ENCODE measurements at regions of chrX and their contacts with region 1.

Region 1: DNA sequence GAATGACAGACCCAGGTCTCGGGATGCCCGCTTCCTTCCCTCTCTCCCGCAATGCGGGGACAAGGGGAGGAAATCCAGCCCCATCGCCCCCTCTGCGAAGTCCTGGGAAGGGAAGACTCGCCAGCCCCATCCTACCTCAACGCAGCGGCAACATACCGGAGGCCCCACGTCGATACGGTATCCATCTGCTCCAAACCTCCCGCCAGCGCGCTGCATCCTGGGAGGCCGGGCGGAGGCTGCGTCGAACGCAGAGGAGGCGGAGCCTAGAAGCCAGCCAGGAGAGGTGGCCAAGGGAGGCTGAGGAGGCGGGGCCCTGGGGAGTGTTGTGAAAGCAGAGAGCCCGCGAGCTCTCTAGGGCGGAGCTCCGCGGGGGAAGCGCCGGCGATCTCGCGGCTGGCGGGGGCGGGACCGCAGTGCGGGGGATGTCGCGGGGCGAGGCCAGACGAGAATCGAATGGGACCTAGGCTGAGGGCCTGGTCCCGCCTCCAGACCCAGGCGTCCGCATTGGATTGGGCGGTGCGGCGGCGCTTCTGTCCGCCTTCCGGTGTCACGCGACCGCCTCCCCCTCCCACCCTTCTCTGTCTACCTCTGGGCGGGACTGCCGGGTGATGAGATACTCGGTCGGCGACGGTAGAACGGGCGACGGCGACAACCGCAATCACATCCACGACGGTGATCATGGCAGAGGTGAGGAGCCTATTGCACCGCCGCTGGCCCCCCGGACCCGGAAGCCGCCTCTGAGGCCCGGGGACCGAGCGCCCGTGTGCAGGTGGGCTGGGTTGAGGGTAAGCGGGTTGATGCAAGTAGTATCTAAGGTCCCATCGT is at the starts of genes FANCB and MOSPD2:
- DNase-seq: peak; percentile 93
- H3K4me3 Mint-ChIP-seq: peak within 1 kb of the TSS; percentile 84
- H3K27ac Mint-ChIP-seq: peak within 1 kb of the TSS; percentile 81
- H3K4me1 Mint-ChIP-seq: peaks cover 17% of the 10 kb centered on the region
- H3K27me3 Mint-ChIP-seq: no peaks in the 10 kb centered on the region
- total RNA-seq, gene FANCB: 17.0 and 18.8 TPM in 2 replicates
- total RNA-seq, gene MOSPD2: 14.3 and 15.1 TPM in 2 replicates

Region 2: DNA sequence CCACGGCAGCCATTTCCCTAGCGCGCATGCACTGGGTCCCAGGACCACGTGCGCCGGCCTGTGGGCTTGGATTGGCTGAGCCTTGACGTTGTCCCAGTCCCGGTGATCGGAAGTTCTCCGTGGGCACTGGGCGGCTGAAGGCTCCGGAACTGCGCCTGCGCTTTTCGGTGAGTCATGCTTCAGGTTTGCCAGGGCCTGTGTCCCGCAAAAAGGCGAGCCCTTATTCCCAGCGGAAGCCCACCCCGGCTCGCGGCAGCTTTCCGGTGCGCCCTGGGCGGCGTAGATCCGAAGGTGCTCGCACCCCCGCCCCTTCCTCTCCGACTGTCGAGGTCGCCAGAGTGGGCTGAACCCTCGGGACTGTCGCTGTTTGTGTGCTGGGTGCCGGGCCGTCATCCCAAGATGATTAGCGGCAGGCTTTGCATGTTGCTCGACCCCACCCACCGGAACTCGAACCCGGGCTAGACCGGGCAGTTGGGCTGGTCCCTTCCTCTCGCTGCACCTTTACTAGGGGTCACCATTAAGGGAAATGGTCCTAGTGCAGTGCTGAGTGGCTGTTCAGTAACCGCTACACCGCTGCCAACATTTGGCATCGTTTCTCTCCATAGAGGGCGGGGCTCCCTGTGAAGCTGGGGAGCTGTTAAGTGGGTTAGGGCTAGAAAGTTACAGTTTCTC is 1219.9 kb before region 1 on chrX and contains the start of gene TCEANC:
- intact Hi-C with region 1: loop called (anchors 1 kb)
- DNase-seq: peak; percentile 91
- H3K4me3 Mint-ChIP-seq: peak within 1 kb of the TSS; percentile 88
- H3K27ac Mint-ChIP-seq: peak within 1 kb of the TSS; percentile 92
- H3K4me1 Mint-ChIP-seq: peaks cover 20% of the 10 kb centered on the region
- H3K27me3 Mint-ChIP-seq: no peaks in the 10 kb centered on the region
- total RNA-seq, gene TCEANC: 3.9 and 5.0 TPM in 2 replicates

Region 3: GRCh38 chrX:14899607-14900006 is 26.5 kb after region 1 on chrX:
- intact Hi-C with region 1: loop called (anchors 1 kb)
- DNase-seq: peak; percentile 0
- H3K4me3 Mint-ChIP-seq: peak overlapping the region; percentile 26
- H3K27ac Mint-ChIP-seq: peak overlapping the region; percentile 77
- H3K4me1 Mint-ChIP-seq: no peaks in the 10 kb centered on the region
- H3K27me3 Mint-ChIP-seq: no peaks in the 10 kb centered on the region

Region 4: DNA sequence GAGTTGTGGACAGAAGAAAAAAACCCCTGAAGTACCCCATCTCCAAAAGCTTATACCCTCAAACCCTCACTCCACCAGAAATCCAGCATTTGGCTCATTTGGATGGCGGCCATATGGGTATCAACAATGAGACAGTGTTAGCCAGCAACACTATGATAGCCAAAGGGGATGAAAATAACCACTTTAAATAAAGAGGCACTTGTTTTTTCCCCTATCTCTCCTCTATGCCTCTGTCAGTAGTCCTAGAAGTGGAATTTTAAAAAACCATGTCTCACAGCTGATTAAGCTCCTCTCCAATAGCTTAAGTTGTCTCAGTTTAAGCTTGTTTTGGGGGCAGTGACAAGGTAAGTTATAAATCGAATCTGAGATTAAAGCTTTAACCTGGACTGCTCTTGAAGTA is 124.2 kb after region 1 on chrX:
- intact Hi-C with region 1: no loop called
- DNase-seq: no peak
- H3K4me3 Mint-ChIP-seq: no peak overlapping the region
- H3K27ac Mint-ChIP-seq: no peak overlapping the region
- H3K4me1 Mint-ChIP-seq: no peaks in the 10 kb centered on the region
- H3K27me3 Mint-ChIP-seq: no peaks in the 10 kb centered on the region

Region 5: DNA sequence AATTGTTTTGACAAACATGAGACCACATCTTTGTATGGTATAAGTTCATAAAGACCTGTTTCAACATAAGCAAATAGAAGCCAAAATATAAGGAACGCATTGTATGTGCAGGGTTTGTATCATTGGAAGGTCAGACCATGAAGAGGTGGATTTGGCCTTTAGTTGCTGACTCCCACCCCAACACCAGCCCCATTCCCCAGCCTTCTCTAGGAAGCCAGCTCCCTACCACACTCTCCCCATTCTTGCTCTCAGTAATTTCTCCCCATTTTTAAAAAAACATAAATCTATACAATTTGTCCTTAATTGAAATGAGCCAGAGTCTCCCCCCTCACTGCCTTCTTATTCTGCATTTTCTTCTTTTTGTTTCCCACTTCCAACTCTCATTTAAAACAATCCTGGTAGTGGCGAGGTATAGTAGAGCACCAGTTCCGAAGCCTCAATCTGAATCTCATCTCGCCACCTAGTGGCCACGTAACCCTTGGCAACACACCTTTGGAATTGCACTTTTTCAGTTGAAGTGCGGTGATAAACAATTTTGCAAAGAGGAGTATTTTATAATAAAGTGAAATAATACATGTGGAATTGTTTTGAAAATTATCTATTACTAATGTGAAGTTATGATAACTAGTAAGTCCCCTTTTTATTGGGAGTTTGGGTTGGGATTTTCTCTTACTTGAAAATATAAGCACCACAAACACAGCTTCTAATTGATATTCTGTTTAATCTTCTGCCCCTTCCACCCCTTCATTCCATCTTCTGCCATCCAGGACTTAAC is 270.2 kb after region 1 on chrX:
- intact Hi-C with region 1: loop called (anchors 5 kb)
- DNase-seq: peak; percentile 11
- H3K4me3 Mint-ChIP-seq: peak overlapping the region; percentile 37
- H3K27ac Mint-ChIP-seq: peak overlapping the region; percentile 26
- H3K4me1 Mint-ChIP-seq: peaks cover 21% of the 10 kb centered on the region
- H3K27me3 Mint-ChIP-seq: no peaks in the 10 kb centered on the region

Region 6: GRCh38 chrX:15335135-15336022 is 462.3 kb after region 1 on chrX and contains the start of gene PIGA:
- intact Hi-C with region 1: loop called (anchors 1 kb)
- DNase-seq: peak; percentile 89
- H3K4me3 Mint-ChIP-seq: peak within 1 kb of the TSS; percentile 91
- H3K27ac Mint-ChIP-seq: peak within 1 kb of the TSS; percentile 88
- H3K4me1 Mint-ChIP-seq: peaks cover 14% of the 10 kb centered on the region
- H3K27me3 Mint-ChIP-seq: no peaks in the 10 kb centered on the region
- total RNA-seq, gene PIGA: 23.9 and 25.4 TPM in 2 replicates

Region 7: DNA sequence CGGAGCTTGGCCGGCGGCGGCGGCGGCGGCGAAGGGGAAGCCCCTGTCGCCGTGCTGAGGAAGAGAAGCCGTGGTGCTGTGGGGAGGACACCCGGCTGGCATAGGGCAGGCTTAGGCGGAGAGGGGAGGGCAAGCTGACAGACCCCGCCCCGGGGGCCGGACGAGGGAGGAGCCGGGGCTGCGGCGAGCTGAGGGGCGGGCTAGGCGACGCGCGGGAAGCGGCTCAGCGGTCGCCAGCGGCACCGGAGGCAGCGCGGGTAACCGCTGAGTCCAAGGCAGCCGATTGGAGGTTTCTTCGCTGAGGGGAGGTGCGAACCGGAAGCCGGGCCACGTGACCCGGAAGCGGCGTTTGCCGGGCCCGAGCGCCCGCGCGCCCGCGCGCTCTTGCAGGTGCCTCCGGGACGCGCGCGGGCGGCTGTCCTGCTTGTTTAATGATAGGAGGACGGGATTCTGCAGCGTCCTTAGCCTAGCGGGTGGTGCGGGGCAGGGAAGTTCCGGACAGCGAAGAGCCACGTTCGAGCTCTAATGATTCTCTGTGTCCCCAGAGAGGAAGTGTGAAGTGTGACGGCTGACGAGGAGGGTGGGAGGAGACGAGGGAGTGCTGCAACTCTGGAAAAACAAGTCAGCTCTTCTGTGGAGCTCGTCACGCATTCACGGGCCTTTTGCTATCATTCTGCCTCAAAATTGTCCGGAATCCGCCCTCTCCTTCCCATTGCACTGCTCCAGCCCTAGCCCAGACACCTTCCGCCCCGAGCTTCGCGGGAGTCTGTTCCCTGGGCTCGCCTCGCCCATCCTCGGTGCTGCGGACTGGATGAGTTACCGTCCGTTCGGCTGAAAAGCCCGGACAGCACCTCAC is 981.9 kb after region 1 on chrX and contains the start of gene AP1S2:
- intact Hi-C with region 1: loop called (anchors 5 kb)
- DNase-seq: peak; percentile 89
- H3K4me3 Mint-ChIP-seq: peak within 1 kb of the TSS; percentile 88
- H3K27ac Mint-ChIP-seq: peak within 1 kb of the TSS; percentile 90
- H3K4me1 Mint-ChIP-seq: peaks cover 10% of the 10 kb centered on the region
- H3K27me3 Mint-ChIP-seq: no peaks in the 10 kb centered on the region
- total RNA-seq, gene AP1S2: 20.7 and 35.3 TPM in 2 replicates